Naive thymus-derived CD4-positive, alpha-beta T cell (primary cell): ENCODE measurements at regions of chr2 and their contacts with region 1.

Region 1: GRCh38 chr2:11032396-11032795 is 120.7 kb downstream of the KCNF1 start:
- DNase-seq: no peak
- ATAC-seq: no peak
- H3K4me3 ChIP-seq: no peak overlapping the region
- H3K4me3 Mint-ChIP-seq: no peak overlapping the region
- H3K27ac ChIP-seq: no peak overlapping the region
- H3K27ac Mint-ChIP-seq: no peak overlapping the region
- H3K4me1 ChIP-seq: no peaks in the 10 kb centered on the region
- H3K4me1 Mint-ChIP-seq: no peaks in the 10 kb centered on the region
- H3K27me3 ChIP-seq: peaks cover 0 to 2% of the 10 kb centered on the region in 2 donors
- H3K27me3 Mint-ChIP-seq: peaks cover 15 to 28% (median 18%) of the 10 kb centered on the region in 5 donors

Region 2: DNA sequence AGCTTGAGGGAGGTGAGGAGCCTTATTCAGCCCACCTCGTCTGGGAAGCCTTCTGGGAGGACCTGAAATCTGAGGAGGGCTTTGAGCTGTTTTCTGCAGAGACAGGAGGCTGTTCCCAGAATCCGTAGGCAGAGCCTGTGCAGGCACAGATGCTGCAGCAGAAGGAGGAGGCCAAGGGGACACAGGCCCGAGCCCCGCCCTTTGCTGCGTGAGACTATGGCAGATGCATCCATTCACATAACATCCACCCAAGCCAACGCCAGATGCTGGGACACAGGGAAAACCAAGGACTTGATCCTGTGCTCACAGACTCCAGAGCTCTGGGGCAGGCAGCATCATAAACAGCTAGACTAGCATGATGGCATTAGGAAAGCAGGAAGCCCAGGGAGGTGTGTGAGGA is 22.5 kb before region 1 on chr2:
- CTCF ChIA-PET with region 1: no interaction called
- POLR2A ChIA-PET with region 1: no interaction called
- intact Hi-C with region 1: loop called in 1 of 2 experiments (anchors 2 kb)
- DNase-seq: no peak
- ATAC-seq: no peak
- H3K4me3 ChIP-seq: no peak overlapping the region
- H3K4me3 Mint-ChIP-seq: no peak overlapping the region
- H3K27ac ChIP-seq: no peak overlapping the region
- H3K27ac Mint-ChIP-seq: no peak overlapping the region
- H3K4me1 ChIP-seq: no peaks in the 10 kb centered on the region
- H3K4me1 Mint-ChIP-seq: no peaks in the 10 kb centered on the region
- H3K27me3 ChIP-seq: no peaks in the 10 kb centered on the region
- H3K27me3 Mint-ChIP-seq: peaks cover 0 to 14% (median 4%) of the 10 kb centered on the region in 5 donors

Region 3: GRCh38 chr2:11515490-11515981 is 483.1 kb after region 1 on chr2:
- CTCF ChIA-PET with region 1: no interaction called
- POLR2A ChIA-PET with region 1: no interaction called
- intact Hi-C with region 1: no loop called
- DNase-seq: no peak
- ATAC-seq: no peak
- H3K4me3 ChIP-seq: no peak overlapping the region
- H3K4me3 Mint-ChIP-seq: no peak overlapping the region
- H3K27ac ChIP-seq: no peak overlapping the region
- H3K27ac Mint-ChIP-seq: no peak overlapping the region
- H3K4me1 ChIP-seq: no peaks in the 10 kb centered on the region
- H3K4me1 Mint-ChIP-seq: no peaks in the 10 kb centered on the region
- H3K27me3 ChIP-seq: no peaks in the 10 kb centered on the region
- H3K27me3 Mint-ChIP-seq: peaks cover 5 to 30% (median 12%) of the 10 kb centered on the region in 5 donors